OCI-LY7 (cell line): ENCODE measurements at regions of chr15 and their contacts with region 1.

Region 1: DNA sequence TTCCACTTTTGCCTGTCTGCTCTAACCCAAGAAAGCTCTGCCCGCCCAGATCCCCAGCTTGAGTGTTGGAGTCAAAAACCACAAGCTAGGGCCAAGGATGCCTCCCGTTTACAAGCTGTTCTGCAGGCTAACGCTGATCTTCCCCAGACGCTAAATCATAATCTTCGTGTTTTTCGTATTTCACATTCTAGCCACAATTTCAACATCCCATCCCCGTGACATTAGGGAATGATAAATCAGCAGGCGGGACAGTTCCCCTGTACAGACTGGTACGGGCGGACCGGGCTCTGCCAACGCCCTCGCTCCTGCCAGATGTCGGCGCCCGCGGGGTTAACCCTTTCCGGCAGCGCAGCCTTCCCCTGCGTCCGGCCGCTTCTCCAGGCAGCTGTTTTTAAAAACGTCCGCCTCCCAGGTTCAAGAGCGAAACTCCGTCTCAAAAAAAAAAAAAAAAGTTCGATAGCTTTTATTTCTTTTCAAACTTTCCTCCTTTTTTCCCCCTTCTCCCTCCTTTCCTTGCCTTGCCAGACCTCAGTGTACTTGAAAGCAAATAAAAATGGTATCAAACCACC is 81.0 kb upstream of the BNC1 start:
- DNase-seq: no peak
- H3K4me3 ChIP-seq: no peak overlapping the region
- H3K27ac ChIP-seq: no peak overlapping the region
- H3K4me1 ChIP-seq: no peaks in the 10 kb centered on the region
- CTCF ChIP-seq: no peak

Region 2: DNA sequence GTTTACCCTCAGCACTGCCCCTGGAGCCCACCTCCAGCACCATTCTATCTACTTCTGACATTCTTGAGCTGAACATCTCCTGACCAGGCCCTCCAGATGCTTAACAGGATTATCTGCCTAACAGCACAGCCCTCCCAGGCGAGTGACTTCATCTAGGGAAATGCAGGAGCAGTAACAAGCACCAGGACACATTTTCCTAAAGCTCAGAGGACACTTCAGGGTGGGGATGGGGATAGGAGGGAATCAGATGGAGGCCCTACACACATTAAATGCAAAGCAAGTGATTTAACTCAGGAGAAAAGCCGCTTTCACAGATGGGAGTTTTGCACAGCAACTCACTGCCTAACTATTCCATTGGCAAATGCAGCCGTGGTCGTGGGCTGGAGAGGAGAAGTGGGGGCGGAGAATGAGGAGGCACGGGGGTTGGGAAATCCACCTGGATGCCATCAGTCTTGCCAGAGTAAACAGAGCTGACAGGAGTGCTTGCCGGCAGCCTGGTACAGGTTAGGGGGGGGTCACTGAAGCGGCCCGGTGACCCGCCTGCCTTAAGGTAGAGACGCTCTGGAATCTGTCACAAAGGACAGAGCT is 59.7 kb before region 1 on chr15:
- CTCF ChIA-PET with region 1: no interaction called
- POLR2A ChIA-PET with region 1: no interaction called
- intact Hi-C with region 1: loop called (anchors 2 kb)
- DNase-seq: no peak
- H3K4me3 ChIP-seq: no peak overlapping the region
- H3K27ac ChIP-seq: no peak overlapping the region
- H3K4me1 ChIP-seq: no peaks in the 10 kb centered on the region
- CTCF ChIP-seq: no peak

Region 3: GRCh38 chr15:83380682-83381081 is 15.2 kb after region 1 on chr15:
- CTCF ChIA-PET with region 1: no interaction called
- POLR2A ChIA-PET with region 1: no interaction called
- intact Hi-C with region 1: no loop called
- DNase-seq: peak; percentile 51
- H3K4me3 ChIP-seq: no peak overlapping the region
- H3K27ac ChIP-seq: no peak overlapping the region
- H3K4me1 ChIP-seq: no peaks in the 10 kb centered on the region
- CTCF ChIP-seq: peak; percentile 72